Vagina (tissue), 2 donors: ENCODE measurements at regions of chr4 and their contacts with region 1.

Region 1: DNA sequence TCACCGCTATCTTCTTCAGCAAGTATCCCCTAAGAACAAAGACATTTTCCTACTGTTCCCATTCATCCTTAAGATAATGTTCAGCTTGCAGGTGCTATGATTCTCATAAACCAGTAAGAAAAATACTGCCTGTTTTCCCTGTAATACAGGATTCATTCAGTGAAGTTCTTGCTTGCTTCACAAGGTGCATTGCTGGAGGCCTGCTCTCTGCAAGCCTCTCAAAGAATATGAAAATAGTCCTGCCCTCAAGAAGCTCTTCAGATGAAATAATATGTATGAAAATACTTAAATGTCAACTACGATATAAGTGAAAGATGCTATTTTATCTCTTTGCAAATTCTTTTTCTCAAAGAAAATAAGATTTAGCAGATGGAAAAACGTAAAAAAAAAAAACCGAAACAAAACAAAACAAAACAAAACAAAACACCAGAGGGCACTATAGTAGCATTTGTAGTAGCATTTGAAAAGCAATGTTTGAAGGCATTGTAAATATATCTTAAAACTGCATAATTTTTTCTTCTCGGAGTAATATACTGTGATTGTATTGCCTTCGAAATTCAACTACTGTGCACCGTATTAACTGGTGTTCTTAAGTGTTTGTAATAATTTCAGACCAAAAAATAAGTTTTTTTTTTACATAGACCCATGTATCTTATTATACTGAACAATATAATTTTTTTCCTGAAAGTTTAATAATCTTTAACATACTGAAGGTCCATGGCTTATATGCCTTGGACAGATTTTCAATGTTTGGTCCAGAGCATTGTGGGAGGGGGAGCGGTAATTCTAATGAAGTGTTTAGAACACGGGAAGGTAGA is 26.0 kb downstream of the ADH4 start:
- DNase-seq: no peak
- H3K4me3 ChIP-seq: no peak overlapping the region
- H3K27ac ChIP-seq: no peak overlapping the region
- H3K4me1 ChIP-seq: no peaks in the 10 kb centered on the region
- H3K27me3 ChIP-seq: no peaks in the 10 kb centered on the region
- CTCF ChIP-seq: peak in 1 of 3 experiments; percentile 5
- POLR2A ChIP-seq: no peak

Region 2: GRCh38 chr4:98260579-98261290 is 857.4 kb before region 1 on chr4:
- intact Hi-C with region 1: no loop called
- DNase-seq: peak in 1 of 2 donors; percentile 93
- H3K4me3 ChIP-seq: peak overlapping the region; percentile 75 to 86
- H3K27ac ChIP-seq: peak overlapping the region; percentile 98
- H3K4me1 ChIP-seq: peaks cover 25% of the 10 kb centered on the region
- H3K27me3 ChIP-seq: no peaks in the 10 kb centered on the region
- CTCF ChIP-seq: no peak
- POLR2A ChIP-seq: peak in 1 of 2 donors; percentile 96

Region 3: GRCh38 chr4:99088481-99089365 is 29.4 kb before region 1 on chr4 and contains the start of gene ADH5:
- intact Hi-C with region 1: loop called (anchors 2 kb)
- DNase-seq: peak in 1 of 2 donors; percentile 94
- H3K4me3 ChIP-seq: peak within 1 kb of the TSS; percentile 78 to 88
- H3K27ac ChIP-seq: peak within 1 kb of the TSS; percentile 93
- H3K4me1 ChIP-seq: peaks cover 41% of the 10 kb centered on the region
- H3K27me3 ChIP-seq: no peaks in the 10 kb centered on the region
- CTCF ChIP-seq: no peak
- POLR2A ChIP-seq: peak in 1 of 2 donors; percentile 78
- total RNA-seq, gene ADH5: 129 TPM